Endothelial cell of umbilical vein (primary cell): ENCODE measurements at regions of chr14 and their contacts with region 1.

Region 1: GRCh38 chr14:32560209-32560857 is 231.2 kb downstream of the AKAP6 start:
- DNase-seq: peak; percentile 76
- H3K4me3 ChIP-seq: no peak overlapping the region
- H3K27ac ChIP-seq: no peak overlapping the region
- H3K4me1 ChIP-seq: peaks cover 2% of the 10 kb centered on the region
- H3K27me3 ChIP-seq: no peaks in the 10 kb centered on the region
- CTCF ChIP-seq: peak; percentile 76 to 83
- POLR2A ChIP-seq: no peak

Region 2: DNA sequence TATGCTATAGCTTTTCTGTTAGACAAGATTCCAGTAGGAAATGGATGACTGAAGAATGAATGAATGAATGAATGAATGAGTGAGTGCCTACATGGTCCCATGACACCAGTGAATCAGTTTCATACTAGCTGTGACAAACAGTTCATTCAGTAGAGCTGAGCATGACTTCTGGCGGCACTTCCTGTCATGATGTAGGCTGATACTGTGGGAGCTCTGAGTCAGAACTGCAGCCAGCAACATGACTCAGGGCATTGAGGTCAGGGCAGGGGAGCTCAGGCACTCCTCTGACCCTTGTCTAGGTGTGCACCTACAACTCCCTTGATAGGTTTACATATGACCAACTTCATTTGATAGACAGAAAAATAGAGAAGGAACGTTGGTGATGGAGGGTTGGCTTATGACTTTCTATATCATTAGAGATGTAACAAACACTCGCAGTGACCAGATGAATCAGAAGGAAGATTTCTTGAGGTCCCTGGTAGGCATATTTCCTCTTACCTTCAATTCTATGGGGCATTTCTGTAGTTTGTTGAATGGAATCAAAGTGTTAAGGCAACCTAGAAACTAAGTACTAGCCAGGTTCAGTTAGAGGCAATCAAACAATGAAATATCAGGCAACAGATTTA is 622.5 kb before region 1 on chr14:
- CTCF ChIA-PET with region 1: interaction called, 3 read pairs
- POLR2A ChIA-PET with region 1: no interaction called
- dilution Hi-C with region 1: no loop called
- intact Hi-C with region 1: loop called (anchors 1 kb)
- DNase-seq: peak; percentile 68
- H3K4me3 ChIP-seq: no peak overlapping the region
- H3K27ac ChIP-seq: peak overlapping the region; percentile 24
- H3K4me1 ChIP-seq: peaks cover 21% of the 10 kb centered on the region
- H3K27me3 ChIP-seq: peaks cover 8 to 11% of the 10 kb centered on the region in 2 experiments
- CTCF ChIP-seq: no peak
- POLR2A ChIP-seq: no peak

Region 3: GRCh38 chr14:32469388-32470160 is 90.8 kb before region 1 on chr14:
- CTCF ChIA-PET with region 1: interaction called, 40 read pairs
- POLR2A ChIA-PET with region 1: no interaction called
- dilution Hi-C with region 1: no loop called
- intact Hi-C with region 1: loop called (anchors 1 kb)
- DNase-seq: peak; percentile 62
- H3K4me3 ChIP-seq: no peak overlapping the region
- H3K27ac ChIP-seq: no peak overlapping the region
- H3K4me1 ChIP-seq: peaks cover 3% of the 10 kb centered on the region
- H3K27me3 ChIP-seq: no peaks in the 10 kb centered on the region
- CTCF ChIP-seq: peak; percentile 17 to 36
- POLR2A ChIP-seq: no peak

Region 4: GRCh38 chr14:32524609-32525375 is 35.5 kb before region 1 on chr14:
- CTCF ChIA-PET with region 1: interaction called, 25 read pairs
- POLR2A ChIA-PET with region 1: no interaction called
- dilution Hi-C with region 1: no loop called
- intact Hi-C with region 1: loop called (anchors 2 kb)
- DNase-seq: peak; percentile 83
- H3K4me3 ChIP-seq: peak overlapping the region in 1 of 3 experiments; percentile 18
- H3K27ac ChIP-seq: peak overlapping the region; percentile 94
- H3K4me1 ChIP-seq: peaks cover 17% of the 10 kb centered on the region
- H3K27me3 ChIP-seq: no peaks in the 10 kb centered on the region
- CTCF ChIP-seq: no peak
- POLR2A ChIP-seq: no peak

Region 5: DNA sequence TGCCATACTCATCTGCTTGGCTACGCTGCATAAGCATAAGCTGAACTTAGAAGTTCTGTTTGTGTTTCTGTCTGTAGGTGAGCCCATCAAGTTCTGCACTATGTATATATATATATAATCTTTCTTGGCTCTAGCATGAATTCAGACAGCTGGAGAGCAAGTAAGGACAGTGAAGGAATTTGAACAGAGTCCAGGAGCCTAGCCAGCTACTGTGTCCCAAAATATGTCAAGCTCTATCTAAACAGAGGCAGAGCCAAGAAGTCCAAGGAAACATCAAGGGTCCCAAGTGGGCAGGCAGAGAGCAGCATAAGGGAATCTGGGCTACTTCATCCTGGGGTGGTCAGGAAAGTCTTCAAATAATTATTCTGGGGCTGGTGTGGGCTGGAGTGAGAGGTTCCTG is 259.8 kb after region 1 on chr14:
- CTCF ChIA-PET with region 1: no interaction called
- POLR2A ChIA-PET with region 1: no interaction called
- dilution Hi-C with region 1: no loop called
- intact Hi-C with region 1: no loop called
- DNase-seq: no peak
- H3K4me3 ChIP-seq: no peak overlapping the region
- H3K27ac ChIP-seq: no peak overlapping the region
- H3K4me1 ChIP-seq: no peaks in the 10 kb centered on the region
- H3K27me3 ChIP-seq: no peaks in the 10 kb centered on the region
- CTCF ChIP-seq: no peak
- POLR2A ChIP-seq: no peak